Mammary epithelial cell (primary cell): ENCODE measurements at regions of chr22 and their contacts with region 1.

Region 1: DNA sequence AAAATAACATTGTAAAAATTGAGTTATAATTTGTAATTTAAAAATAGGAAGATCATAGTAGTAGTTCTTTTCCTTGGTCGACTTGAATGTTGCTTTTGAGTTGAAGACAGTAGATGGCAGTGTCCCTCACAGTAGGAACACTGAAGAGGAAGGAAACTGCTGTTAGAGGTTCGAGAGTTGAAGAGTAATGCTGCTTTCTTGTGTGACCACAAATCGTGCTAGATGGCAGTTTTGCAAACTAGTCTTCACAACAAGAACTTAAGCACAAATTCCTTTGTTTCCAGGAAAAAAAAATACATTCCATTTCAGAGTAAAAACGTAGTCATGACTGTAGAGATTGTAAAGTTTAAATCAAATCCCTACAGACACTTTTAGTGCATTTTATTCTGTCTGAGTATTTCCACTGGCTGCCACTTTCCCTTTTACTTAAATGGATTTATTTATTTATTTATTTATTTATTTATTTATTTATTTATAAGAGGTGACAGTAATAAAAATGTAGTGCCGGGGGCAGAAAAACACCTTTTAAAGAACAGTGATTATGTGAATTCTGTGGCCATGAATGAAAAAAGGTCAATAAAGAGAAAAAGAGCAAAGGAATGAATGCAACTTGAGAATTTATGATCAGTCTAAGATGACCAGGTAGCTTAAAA is 54.6 kb downstream of the SPECC1L start:
- DNase-seq: peak; percentile 39
- H3K4me3 ChIP-seq: no peak overlapping the region
- H3K27ac ChIP-seq: no peak overlapping the region
- H3K4me1 ChIP-seq: peaks cover 5% of the 10 kb centered on the region
- H3K27me3 ChIP-seq: no peaks in the 10 kb centered on the region
- CTCF ChIP-seq: peak; percentile 54 to 71

Region 2: DNA sequence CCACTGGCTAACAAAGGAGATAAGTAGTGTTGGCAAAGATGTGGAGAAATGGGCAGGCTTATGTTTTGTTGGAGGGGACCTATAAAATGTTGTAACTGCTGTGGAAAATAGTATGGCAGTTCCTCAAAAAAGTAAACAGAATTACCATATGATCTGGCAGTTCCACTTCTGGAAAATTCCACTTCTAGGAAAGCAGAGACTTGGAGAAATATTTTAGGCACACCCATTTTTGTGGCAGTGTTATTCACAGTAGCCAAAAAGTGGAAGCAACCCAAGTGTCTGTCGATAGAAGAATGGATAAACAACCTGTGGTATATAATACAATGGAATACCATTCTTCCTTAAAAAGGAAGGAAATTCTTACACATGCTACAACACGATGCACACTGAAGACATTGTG is 45.2 kb after region 1 on chr22:
- CTCF ChIA-PET with region 1: no interaction called
- dilution Hi-C with region 1: no loop called
- in situ Hi-C with region 1: no loop called
- intact Hi-C with region 1: loop called (anchors 5 kb)
- DNase-seq: peak; percentile 32
- H3K4me3 ChIP-seq: no peak overlapping the region
- H3K27ac ChIP-seq: no peak overlapping the region
- H3K4me1 ChIP-seq: peaks cover 8% of the 10 kb centered on the region
- H3K27me3 ChIP-seq: no peaks in the 10 kb centered on the region
- CTCF ChIP-seq: no peak

Region 3: GRCh38 chr22:24380905-24381230 is 55.6 kb after region 1 on chr22:
- CTCF ChIA-PET with region 1: no interaction called
- dilution Hi-C with region 1: no loop called
- in situ Hi-C with region 1: no loop called
- intact Hi-C with region 1: no loop called
- DNase-seq: no peak
- H3K4me3 ChIP-seq: no peak overlapping the region
- H3K27ac ChIP-seq: no peak overlapping the region
- H3K4me1 ChIP-seq: no peaks in the 10 kb centered on the region
- H3K27me3 ChIP-seq: no peaks in the 10 kb centered on the region
- CTCF ChIP-seq: no peak

Region 4: DNA sequence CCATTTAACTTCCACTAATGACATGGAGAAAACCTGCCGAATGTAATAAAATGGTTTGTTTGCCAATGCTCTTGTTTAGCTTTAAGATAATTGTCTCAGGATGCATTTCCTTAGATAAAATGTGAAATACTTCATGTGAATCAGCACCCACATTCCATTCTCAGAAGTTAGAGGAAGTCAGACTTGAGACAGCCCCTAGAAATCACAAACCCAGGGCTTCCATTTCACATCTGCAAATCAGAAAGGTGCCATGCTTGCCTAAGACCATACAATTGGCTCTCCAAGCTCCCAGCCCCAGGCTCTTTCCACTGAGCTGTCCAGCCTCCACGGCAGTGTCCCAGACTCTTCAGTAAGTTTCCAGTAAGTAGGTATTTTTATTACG is 66.6 kb after region 1 on chr22:
- CTCF ChIA-PET with region 1: no interaction called
- dilution Hi-C with region 1: no loop called
- in situ Hi-C with region 1: no loop called
- intact Hi-C with region 1: loop called (anchors 10 kb)
- DNase-seq: no peak
- H3K4me3 ChIP-seq: no peak overlapping the region
- H3K27ac ChIP-seq: no peak overlapping the region
- H3K4me1 ChIP-seq: peaks cover 4% of the 10 kb centered on the region
- H3K27me3 ChIP-seq: no peaks in the 10 kb centered on the region
- CTCF ChIP-seq: no peak

Region 5: DNA sequence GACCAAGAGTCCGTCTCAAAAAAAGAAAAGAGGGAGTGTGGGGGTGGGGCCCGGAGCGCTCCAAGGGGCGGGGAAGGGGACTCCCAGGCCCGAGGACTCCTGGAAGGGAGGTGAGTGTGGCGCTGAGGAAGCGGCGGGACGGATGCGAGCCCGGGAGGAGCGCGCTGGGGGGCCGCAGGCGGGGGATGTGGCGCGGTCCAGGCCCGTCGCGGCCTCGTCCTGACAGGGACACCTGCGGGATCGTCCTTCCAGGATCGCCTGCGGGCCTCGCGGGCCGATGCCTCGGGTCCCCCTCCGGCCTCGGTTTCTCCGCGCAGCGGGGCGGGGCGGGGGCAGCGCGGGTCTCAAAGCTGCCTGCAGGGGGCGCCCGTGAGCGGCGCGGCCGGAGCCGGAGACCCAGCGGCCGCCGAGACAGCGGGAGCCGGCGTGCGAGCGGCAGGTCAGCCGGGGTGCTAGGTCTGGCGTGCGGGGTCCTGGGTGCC is 98.3 kb after region 1 on chr22:
- CTCF ChIA-PET with region 1: no interaction called
- dilution Hi-C with region 1: no loop called
- in situ Hi-C with region 1: no loop called
- intact Hi-C with region 1: loop called (anchors 1 kb)
- DNase-seq: no peak
- H3K4me3 ChIP-seq: peak overlapping the region in 2 of 3 experiments; percentile 54
- H3K27ac ChIP-seq: no peak overlapping the region
- H3K4me1 ChIP-seq: peaks cover 28% of the 10 kb centered on the region
- H3K27me3 ChIP-seq: peaks cover 3% of the 10 kb centered on the region
- CTCF ChIP-seq: peak; percentile 42 to 62

Region 6: DNA sequence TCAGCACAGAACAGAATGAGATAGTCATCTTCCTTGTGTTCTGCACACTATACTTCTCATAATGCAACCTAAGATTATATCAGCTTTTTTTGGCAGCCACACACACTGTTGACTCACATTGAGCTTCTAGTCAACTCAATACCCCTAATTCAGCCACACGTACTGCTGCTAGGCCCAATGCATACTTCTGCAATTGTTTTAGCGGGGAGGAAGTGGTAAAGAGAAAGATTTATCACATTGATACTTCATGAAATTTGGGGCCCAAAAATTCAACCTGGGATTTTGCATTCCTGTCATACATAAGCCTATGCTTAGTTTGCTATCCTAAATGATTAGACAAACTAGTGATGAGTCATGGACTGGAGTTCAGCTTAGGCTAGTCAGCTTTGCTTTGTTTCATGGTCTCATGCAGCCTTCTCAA is 161.3 kb after region 1 on chr22:
- CTCF ChIA-PET with region 1: no interaction called
- dilution Hi-C with region 1: no loop called
- in situ Hi-C with region 1: no loop called
- intact Hi-C with region 1: loop called (anchors 1 kb)
- DNase-seq: peak; percentile 95
- H3K4me3 ChIP-seq: no peak overlapping the region
- H3K27ac ChIP-seq: no peak overlapping the region
- H3K4me1 ChIP-seq: peaks cover 51% of the 10 kb centered on the region
- H3K27me3 ChIP-seq: no peaks in the 10 kb centered on the region
- CTCF ChIP-seq: no peak

Region 7: DNA sequence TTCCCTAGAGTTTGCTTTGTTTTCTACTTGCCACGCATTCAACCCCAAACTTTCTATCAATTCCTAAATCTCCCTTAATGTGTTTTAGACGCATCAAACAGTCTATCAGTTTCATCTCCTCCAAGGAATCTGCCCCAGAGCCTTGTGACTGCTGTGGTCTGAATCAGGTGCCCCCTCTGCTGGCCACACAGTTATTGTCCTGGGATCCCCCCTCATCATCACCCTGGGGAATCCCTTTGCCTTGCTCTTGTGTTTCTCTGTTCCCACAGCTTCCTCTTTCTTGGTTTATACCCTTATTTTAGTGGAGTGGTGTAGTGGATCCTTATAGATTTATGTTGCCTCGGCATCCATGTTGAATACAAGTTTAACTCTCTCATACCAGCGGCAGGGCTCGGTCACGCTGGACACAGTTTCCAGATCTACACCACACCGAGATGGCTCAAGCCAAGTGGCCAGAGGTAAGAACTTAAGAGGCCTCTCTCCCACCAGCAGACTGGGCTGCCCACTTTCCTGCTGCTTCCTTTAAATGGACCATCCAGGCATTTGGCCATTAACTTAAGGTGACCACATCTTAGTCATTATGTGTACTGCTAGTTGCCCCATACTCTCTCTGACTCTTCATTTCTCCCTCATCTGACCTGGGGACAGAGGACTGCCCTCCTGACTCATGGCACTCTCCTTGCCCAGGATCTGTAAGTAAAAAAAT is 178.1 kb after region 1 on chr22:
- CTCF ChIA-PET with region 1: no interaction called
- dilution Hi-C with region 1: no loop called
- in situ Hi-C with region 1: no loop called
- intact Hi-C with region 1: loop called (anchors 1 kb)
- DNase-seq: peak; percentile 56
- H3K4me3 ChIP-seq: no peak overlapping the region
- H3K27ac ChIP-seq: no peak overlapping the region
- H3K4me1 ChIP-seq: no peaks in the 10 kb centered on the region
- H3K27me3 ChIP-seq: no peaks in the 10 kb centered on the region
- CTCF ChIP-seq: peak; percentile 69 to 78